CD4-positive, alpha-beta memory T cell (primary cell): ENCODE measurements at regions of chr15 and their contacts with region 1.

Region 1: GRCh38 chr15:56052395-56053045 is 59.1 kb upstream of the NEDD4 start:
- DNase-seq: peak in 4 of 5 donors; percentile 44 to 59 (median 47)
- H3K4me3 ChIP-seq: no peak overlapping the region
- H3K4me3 Mint-ChIP-seq: no peak overlapping the region
- H3K27ac ChIP-seq: no peak overlapping the region
- H3K27ac Mint-ChIP-seq: peak overlapping the region in 2 of 7 donors; percentile 31 to 36
- H3K4me1 ChIP-seq: no peaks in the 10 kb centered on the region
- H3K4me1 Mint-ChIP-seq: peaks cover 0 to 5% (median 3%) of the 10 kb centered on the region in 4 donors
- H3K27me3 ChIP-seq: no peaks in the 10 kb centered on the region
- H3K27me3 Mint-ChIP-seq: no peaks in the 10 kb centered on the region

Region 2: GRCh38 chr15:55649054-55649423 is 403.5 kb before region 1 on chr15:
- CTCF ChIA-PET with region 1: interaction called, 38 read pairs
- POLR2A ChIA-PET with region 1: no interaction called
- intact Hi-C with region 1: loop called (anchors 1 kb)
- DNase-seq: no peak
- H3K4me3 ChIP-seq: no peak overlapping the region
- H3K4me3 Mint-ChIP-seq: no peak overlapping the region
- H3K27ac ChIP-seq: no peak overlapping the region
- H3K27ac Mint-ChIP-seq: no peak overlapping the region
- H3K4me1 ChIP-seq: no peaks in the 10 kb centered on the region
- H3K4me1 Mint-ChIP-seq: no peaks in the 10 kb centered on the region
- H3K27me3 ChIP-seq: no peaks in the 10 kb centered on the region
- H3K27me3 Mint-ChIP-seq: no peaks in the 10 kb centered on the region

Region 3: DNA sequence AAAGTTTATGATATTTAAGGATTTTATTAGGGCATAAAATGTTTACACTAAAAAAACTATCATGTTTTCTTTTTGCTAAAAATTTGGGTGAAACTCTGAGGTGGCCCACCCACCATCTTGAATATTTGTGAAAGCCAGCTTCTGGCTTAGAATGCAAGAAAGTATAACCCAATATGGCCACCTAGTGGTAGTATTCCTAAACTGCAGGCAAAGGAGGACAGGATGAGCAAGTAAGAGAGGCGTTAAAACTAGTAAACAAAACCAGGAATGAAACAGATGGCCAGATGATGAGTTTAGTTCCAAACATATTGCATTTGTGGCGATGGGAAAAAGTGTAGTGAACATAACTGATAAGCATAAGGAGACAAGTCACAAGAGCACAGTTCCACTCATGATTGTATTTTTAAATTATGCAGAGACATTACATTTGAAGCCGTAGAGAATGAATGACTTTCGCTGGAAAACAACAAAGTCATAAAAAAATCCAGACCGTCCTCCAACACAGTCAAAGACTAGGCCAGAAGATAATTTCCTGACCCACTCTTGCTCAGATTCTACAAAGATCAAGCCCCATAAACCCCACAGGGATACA is 206.3 kb before region 1 on chr15:
- CTCF ChIA-PET with region 1: interaction called, 3 read pairs
- POLR2A ChIA-PET with region 1: no interaction called
- intact Hi-C with region 1: loop called (anchors 1 kb)
- DNase-seq: peak; percentile 50 to 61 (median 56)
- H3K4me3 ChIP-seq: no peak overlapping the region
- H3K4me3 Mint-ChIP-seq: no peak overlapping the region
- H3K27ac ChIP-seq: no peak overlapping the region
- H3K27ac Mint-ChIP-seq: no peak overlapping the region
- H3K4me1 ChIP-seq: no peaks in the 10 kb centered on the region
- H3K4me1 Mint-ChIP-seq: peaks cover 0 to 4% (median 2%) of the 10 kb centered on the region in 4 donors
- H3K27me3 ChIP-seq: no peaks in the 10 kb centered on the region
- H3K27me3 Mint-ChIP-seq: no peaks in the 10 kb centered on the region

Region 4: GRCh38 chr15:55899537-55899936 is 153.0 kb before region 1 on chr15:
- CTCF ChIA-PET with region 1: interaction called, 14 read pairs
- POLR2A ChIA-PET with region 1: no interaction called
- intact Hi-C with region 1: no loop called
- DNase-seq: no peak
- H3K4me3 ChIP-seq: no peak overlapping the region
- H3K4me3 Mint-ChIP-seq: no peak overlapping the region
- H3K27ac ChIP-seq: no peak overlapping the region
- H3K27ac Mint-ChIP-seq: no peak overlapping the region
- H3K4me1 ChIP-seq: no peaks in the 10 kb centered on the region
- H3K4me1 Mint-ChIP-seq: peaks cover 6 to 7% (median 7%) of the 10 kb centered on the region in 4 donors
- H3K27me3 ChIP-seq: no peaks in the 10 kb centered on the region
- H3K27me3 Mint-ChIP-seq: no peaks in the 10 kb centered on the region

Region 5: GRCh38 chr15:55917881-55918296 is 134.6 kb before region 1 on chr15:
- CTCF ChIA-PET with region 1: interaction called, 9 read pairs
- POLR2A ChIA-PET with region 1: no interaction called
- intact Hi-C with region 1: loop called (anchors 1 kb)
- DNase-seq: peak in 3 of 5 donors; percentile 5 to 15 (median 5)
- H3K4me3 ChIP-seq: no peak overlapping the region
- H3K4me3 Mint-ChIP-seq: no peak overlapping the region
- H3K27ac ChIP-seq: no peak overlapping the region
- H3K27ac Mint-ChIP-seq: no peak overlapping the region
- H3K4me1 ChIP-seq: no peaks in the 10 kb centered on the region
- H3K4me1 Mint-ChIP-seq: peaks cover 0 to 1% (median 0%) of the 10 kb centered on the region in 4 donors
- H3K27me3 ChIP-seq: no peaks in the 10 kb centered on the region
- H3K27me3 Mint-ChIP-seq: no peaks in the 10 kb centered on the region

Region 6: DNA sequence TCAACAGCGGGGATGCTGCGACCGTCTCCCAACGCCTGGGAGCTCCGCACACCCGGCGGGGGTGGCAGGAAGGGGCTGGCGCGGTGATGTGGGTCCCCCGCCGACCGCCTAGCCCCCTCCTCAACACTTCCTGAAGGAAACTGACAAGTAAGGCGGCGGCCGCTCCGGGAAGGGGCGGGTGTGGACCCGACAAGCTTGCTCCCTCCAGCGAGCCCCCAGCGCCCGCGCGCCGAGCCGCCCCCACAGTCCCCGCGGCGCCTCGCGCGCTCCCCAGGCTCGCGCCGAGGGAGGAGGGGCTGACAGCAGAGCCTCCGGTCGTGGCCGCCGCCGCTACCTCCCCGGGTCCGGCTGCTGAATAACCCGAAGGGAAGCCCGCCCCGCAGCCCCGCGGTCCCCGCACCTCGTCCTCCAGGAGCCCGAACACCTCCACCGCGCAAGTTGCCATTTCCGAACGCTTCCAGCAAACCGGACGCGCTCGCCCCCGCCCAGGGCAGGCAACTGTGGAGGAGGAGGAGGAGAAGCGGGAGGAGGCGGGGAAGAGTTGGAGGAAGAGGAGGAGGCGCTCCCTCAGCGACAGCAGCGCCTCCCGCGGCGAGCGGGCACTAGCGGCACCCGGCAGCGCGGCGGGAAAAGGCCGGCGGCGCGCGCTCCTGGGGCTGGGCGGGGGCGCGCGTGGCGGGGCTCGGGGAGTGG is 59.3 kb before region 1 on chr15 and contains the start of gene NEDD4:
- CTCF ChIA-PET with region 1: interaction called, 14 read pairs
- POLR2A ChIA-PET with region 1: interaction called, 3 read pairs
- intact Hi-C with region 1: loop called (anchors 1 kb)
- DNase-seq: peak; percentile 64 to 82 (median 74)
- H3K4me3 ChIP-seq: peak within 1 kb of the TSS; percentile 36 to 61
- H3K4me3 Mint-ChIP-seq: peak within 1 kb of the TSS; percentile 89 to 94 (median 92)
- H3K27ac ChIP-seq: no peak within 1 kb of the TSS
- H3K27ac Mint-ChIP-seq: peak within 1 kb of the TSS; percentile 17 to 85 (median 61)
- H3K4me1 ChIP-seq: peaks cover 15% of the 10 kb centered on the region
- H3K4me1 Mint-ChIP-seq: peaks cover 10 to 27% (median 17%) of the 10 kb centered on the region in 4 donors
- H3K27me3 ChIP-seq: no peaks in the 10 kb centered on the region
- H3K27me3 Mint-ChIP-seq: no peaks in the 10 kb centered on the region
- total RNA-seq, gene NEDD4: 4.2 to 5.8 TPM

Region 7: GRCh38 chr15:56040081-56041035 is 12.2 kb before region 1 on chr15:
- CTCF ChIA-PET with region 1: interaction called, 25 read pairs
- POLR2A ChIA-PET with region 1: interaction called, 3 read pairs
- intact Hi-C with region 1: loop called (anchors 1 kb)
- DNase-seq: peak in 1 of 5 donors; percentile 49
- H3K4me3 ChIP-seq: no peak overlapping the region
- H3K4me3 Mint-ChIP-seq: no peak overlapping the region
- H3K27ac ChIP-seq: no peak overlapping the region
- H3K27ac Mint-ChIP-seq: no peak overlapping the region
- H3K4me1 ChIP-seq: peaks cover 43% of the 10 kb centered on the region
- H3K4me1 Mint-ChIP-seq: peaks cover 27 to 52% (median 40%) of the 10 kb centered on the region in 4 donors
- H3K27me3 ChIP-seq: no peaks in the 10 kb centered on the region
- H3K27me3 Mint-ChIP-seq: no peaks in the 10 kb centered on the region